ENCODE measurements at regions of chr5 and their contacts with region 1.

Region 1: GRCh38 chr5:69166686-69167492 is at the start of gene CCNB1:
- DNase-seq: peak; percentile 95 to 97 (median 96)
- H3K4me3 ChIP-seq: peak within 1 kb of the TSS; percentile 47 to 90
- H3K4me3 Mint-ChIP-seq: peak within 1 kb of the TSS; percentile 90 to 96 (median 94)
- H3K27ac ChIP-seq: peak within 1 kb of the TSS; percentile 63
- H3K27ac Mint-ChIP-seq: peak within 1 kb of the TSS; percentile 88 to 97 (median 94)
- H3K4me1 ChIP-seq: peaks cover 20% of the 10 kb centered on the region
- H3K4me1 Mint-ChIP-seq: peaks cover 11 to 29% (median 20%) of the 10 kb centered on the region in 4 donors
- H3K27me3 ChIP-seq: no peaks in the 10 kb centered on the region
- H3K27me3 Mint-ChIP-seq: no peaks in the 10 kb centered on the region
- total RNA-seq, gene CCNB1: 2.9 to 3.4 TPM

Region 2: GRCh38 chr5:69105996-69106906 is 60.6 kb before region 1 on chr5:
- CTCF ChIA-PET with region 1: no interaction called
- POLR2A ChIA-PET with region 1: no interaction called
- intact Hi-C with region 1: no loop called
- DNase-seq: no peak
- H3K4me3 ChIP-seq: no peak overlapping the region
- H3K4me3 Mint-ChIP-seq: no peak overlapping the region
- H3K27ac ChIP-seq: no peak overlapping the region
- H3K27ac Mint-ChIP-seq: peak overlapping the region in 3 of 7 donors; percentile 11 to 52 (median 37)
- H3K4me1 ChIP-seq: no peaks in the 10 kb centered on the region
- H3K4me1 Mint-ChIP-seq: peaks cover 0 to 5% (median 2%) of the 10 kb centered on the region in 4 donors
- H3K27me3 ChIP-seq: no peaks in the 10 kb centered on the region
- H3K27me3 Mint-ChIP-seq: no peaks in the 10 kb centered on the region

Region 3: GRCh38 chr5:69189162-69190086 is 22.5 kb after region 1 on chr5 and contains the start of gene CENPH:
- CTCF ChIA-PET with region 1: no interaction called
- POLR2A ChIA-PET with region 1: interaction called, 19 read pairs
- intact Hi-C with region 1: loop called (anchors 1 kb)
- DNase-seq: peak; percentile 90 to 92 (median 91)
- H3K4me3 ChIP-seq: peak within 1 kb of the TSS; percentile 78
- H3K4me3 Mint-ChIP-seq: peak within 1 kb of the TSS; percentile 89 to 95 (median 92)
- H3K27ac ChIP-seq: peak within 1 kb of the TSS; percentile 68
- H3K27ac Mint-ChIP-seq: peak within 1 kb of the TSS; percentile 90 to 97 (median 96)
- H3K4me1 ChIP-seq: peaks cover 13% of the 10 kb centered on the region
- H3K4me1 Mint-ChIP-seq: peaks cover 5 to 21% (median 14%) of the 10 kb centered on the region in 4 donors
- H3K27me3 ChIP-seq: no peaks in the 10 kb centered on the region
- H3K27me3 Mint-ChIP-seq: no peaks in the 10 kb centered on the region
- total RNA-seq, gene CENPH: 6.1 to 6.9 TPM

Region 4: DNA sequence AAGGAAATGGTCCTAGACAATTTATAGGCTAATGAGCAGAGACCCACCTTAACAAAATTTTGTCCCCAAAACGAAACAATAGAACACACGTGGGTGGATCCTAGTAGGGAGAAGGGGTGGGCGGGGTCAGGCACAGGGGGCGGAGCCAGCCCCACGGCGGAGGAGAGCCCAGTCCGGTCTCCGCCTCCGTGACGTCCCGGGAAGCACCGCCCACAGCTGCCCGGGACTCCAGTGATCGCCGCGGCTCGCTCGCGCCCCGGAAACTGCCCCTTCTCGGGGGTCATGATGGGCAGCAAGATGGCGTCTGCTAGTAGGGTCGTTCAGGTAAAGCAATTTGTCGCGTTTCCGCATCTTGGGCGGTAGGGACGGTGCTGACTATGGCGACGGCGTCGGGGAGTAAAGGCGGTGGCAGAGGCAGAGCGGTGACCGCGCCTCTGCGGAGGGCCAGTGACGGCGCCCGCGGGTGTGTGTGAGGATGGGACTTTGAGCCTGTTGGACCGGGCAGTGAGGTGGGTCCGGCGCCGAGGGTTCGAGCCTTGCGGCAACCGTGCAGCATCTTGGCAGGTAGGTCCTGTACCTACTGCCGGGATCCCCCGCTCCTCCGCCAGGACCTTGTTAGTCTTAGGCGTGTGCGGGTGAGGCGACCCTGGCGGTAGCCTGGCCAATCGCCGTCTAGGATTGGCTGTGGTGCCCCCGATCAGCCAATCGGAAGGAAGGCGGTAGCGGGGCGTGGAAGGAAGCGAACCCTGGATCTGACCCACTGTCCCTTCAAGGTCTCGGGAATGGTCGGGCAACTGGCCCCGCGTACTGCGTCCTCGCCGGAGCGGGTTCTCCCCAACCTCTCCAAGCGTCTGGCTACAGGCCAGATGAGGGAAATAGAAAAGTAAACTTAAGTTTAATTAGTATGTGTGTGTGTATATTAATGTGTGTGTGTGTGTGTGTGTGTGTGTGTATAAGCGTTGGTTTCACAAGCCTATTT is 50.9 kb after region 1 on chr5:
- CTCF ChIA-PET with region 1: no interaction called
- POLR2A ChIA-PET with region 1: interaction called, 3 read pairs
- intact Hi-C with region 1: loop called (anchors 1 kb)
- DNase-seq: peak; percentile 89 to 94 (median 90)
- H3K4me3 ChIP-seq: peak overlapping the region; percentile 67 to 92
- H3K4me3 Mint-ChIP-seq: peak overlapping the region; percentile 96 to 100 (median 98)
- H3K27ac ChIP-seq: peak overlapping the region; percentile 87
- H3K27ac Mint-ChIP-seq: peak overlapping the region; percentile 97 to 100 (median 98)
- H3K4me1 ChIP-seq: peaks cover 22% of the 10 kb centered on the region
- H3K4me1 Mint-ChIP-seq: peaks cover 19 to 27% (median 25%) of the 10 kb centered on the region in 4 donors
- H3K27me3 ChIP-seq: no peaks in the 10 kb centered on the region
- H3K27me3 Mint-ChIP-seq: no peaks in the 10 kb centered on the region

Region 5: GRCh38 chr5:69334793-69335268 is 167.9 kb after region 1 on chr5:
- CTCF ChIA-PET with region 1: interaction called, 4 read pairs
- POLR2A ChIA-PET with region 1: interaction called, 7 read pairs
- intact Hi-C with region 1: loop called (anchors 1 kb)
- DNase-seq: peak; percentile 61 to 73 (median 70)
- H3K4me3 ChIP-seq: no peak overlapping the region
- H3K4me3 Mint-ChIP-seq: peak overlapping the region; percentile 42 to 66 (median 53)
- H3K27ac ChIP-seq: no peak overlapping the region
- H3K27ac Mint-ChIP-seq: peak overlapping the region; percentile 53 to 91 (median 72)
- H3K4me1 ChIP-seq: peaks cover 19% of the 10 kb centered on the region
- H3K4me1 Mint-ChIP-seq: peaks cover 11 to 33% (median 16%) of the 10 kb centered on the region in 4 donors
- H3K27me3 ChIP-seq: no peaks in the 10 kb centered on the region
- H3K27me3 Mint-ChIP-seq: no peaks in the 10 kb centered on the region

Region 6: DNA sequence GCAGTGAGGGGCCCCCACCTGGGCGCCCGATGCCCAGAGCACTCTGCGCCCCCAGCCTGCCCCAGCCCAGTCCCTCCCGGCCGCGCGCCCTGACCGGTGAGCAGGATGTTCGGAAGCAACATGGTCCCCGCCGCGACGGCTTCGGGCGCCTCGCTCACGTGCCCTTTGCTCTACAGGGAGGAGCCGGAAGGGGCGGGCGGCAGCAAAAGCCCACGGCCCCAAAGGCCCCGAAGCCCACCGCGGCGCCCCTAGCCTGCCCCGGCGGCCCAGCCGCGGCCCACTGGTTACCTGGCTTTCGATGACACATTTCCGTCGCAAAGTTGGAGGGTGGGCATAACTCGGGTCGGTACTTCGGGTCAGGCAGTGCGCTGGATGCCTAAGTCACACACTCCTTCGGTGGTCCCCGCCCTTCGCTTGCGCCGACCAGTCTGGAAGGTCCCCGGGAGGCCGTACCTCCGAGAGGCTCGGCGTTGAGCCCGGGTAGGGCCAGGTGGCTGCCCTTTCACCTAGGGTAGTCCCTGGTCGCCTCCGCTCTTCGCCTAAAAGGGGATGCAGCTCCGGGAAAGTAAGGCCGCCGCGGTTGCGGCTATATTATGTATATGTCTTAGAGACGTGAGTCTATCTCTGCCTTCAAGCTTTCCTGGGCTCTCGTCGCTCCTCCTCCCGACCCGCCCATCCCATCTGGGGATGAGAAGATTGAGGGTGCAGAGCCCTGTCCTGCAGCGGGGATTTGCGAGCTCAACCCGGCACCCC is 202.7 kb after region 1 on chr5 and contains the starts of genes AK6, RAD17 and TAF9:
- CTCF ChIA-PET with region 1: no interaction called
- POLR2A ChIA-PET with region 1: no interaction called
- intact Hi-C with region 1: loop called (anchors 1 kb)
- DNase-seq: peak; percentile 94 to 98 (median 96)
- H3K4me3 ChIP-seq: peak within 1 kb of the TSS; percentile 67 to 75
- H3K4me3 Mint-ChIP-seq: peak within 1 kb of the TSS; percentile 95 to 99 (median 98)
- H3K27ac ChIP-seq: peak within 1 kb of the TSS; percentile 99
- H3K27ac Mint-ChIP-seq: peak within 1 kb of the TSS; percentile 99 to 100 (median 99)
- H3K4me1 ChIP-seq: peaks cover 29% of the 10 kb centered on the region
- H3K4me1 Mint-ChIP-seq: peaks cover 24 to 67% (median 46%) of the 10 kb centered on the region in 4 donors
- H3K27me3 ChIP-seq: no peaks in the 10 kb centered on the region
- H3K27me3 Mint-ChIP-seq: no peaks in the 10 kb centered on the region
- total RNA-seq, gene AK6: 25.3 to 31.4 TPM
- total RNA-seq, gene RAD17: 30.7 to 31.1 TPM
- total RNA-seq, gene TAF9: 42.3 to 45.9 TPM